Common myeloid progenitor, CD34-positive (primary cell): ENCODE measurements at regions of chr3 and their contacts with region 1.

Region 1: GRCh38 chr3:39146984-39147591 is 6.3 kb downstream of the CSRNP1 start:
- DNase-seq: peak; percentile 83 to 97 (median 94)
- H3K4me3 ChIP-seq: peak overlapping the region in 6 of 7 experiments; percentile 45 to 72 (median 53)
- H3K27ac ChIP-seq: peak overlapping the region; percentile 95 to 96
- H3K4me1 ChIP-seq: peaks cover 25 to 80% (median 73%) of the 10 kb centered on the region in 4 experiments
- H3K27me3 ChIP-seq: no peaks in the 10 kb centered on the region

Region 2: GRCh38 chr3:39107388-39108199 is 39.5 kb before region 1 on chr3 and contains the starts of genes GORASP1 and TTC21A:
- CTCF ChIA-PET with region 1: interaction called, 13 read pairs
- POLR2A ChIA-PET with region 1: interaction called, 6 read pairs
- DNase-seq: peak; percentile 80 to 89 (median 85)
- H3K4me3 ChIP-seq: peak within 1 kb of the TSS; percentile 73 to 94 (median 85)
- H3K27ac ChIP-seq: peak within 1 kb of the TSS; percentile 37 to 71
- H3K4me1 ChIP-seq: peaks cover 2 to 35% (median 25%) of the 10 kb centered on the region in 4 experiments
- H3K27me3 ChIP-seq: no peaks in the 10 kb centered on the region

Region 3: GRCh38 chr3:39166134-39166731 is 19.1 kb after region 1 on chr3:
- CTCF ChIA-PET with region 1: interaction called, 11 read pairs
- POLR2A ChIA-PET with region 1: no interaction called
- DNase-seq: peak in 2 of 3 donors; percentile 49 to 53
- H3K4me3 ChIP-seq: no peak overlapping the region
- H3K27ac ChIP-seq: no peak overlapping the region
- H3K4me1 ChIP-seq: peaks cover 0 to 7% (median 4%) of the 10 kb centered on the region in 4 experiments
- H3K27me3 ChIP-seq: no peaks in the 10 kb centered on the region

Region 4: DNA sequence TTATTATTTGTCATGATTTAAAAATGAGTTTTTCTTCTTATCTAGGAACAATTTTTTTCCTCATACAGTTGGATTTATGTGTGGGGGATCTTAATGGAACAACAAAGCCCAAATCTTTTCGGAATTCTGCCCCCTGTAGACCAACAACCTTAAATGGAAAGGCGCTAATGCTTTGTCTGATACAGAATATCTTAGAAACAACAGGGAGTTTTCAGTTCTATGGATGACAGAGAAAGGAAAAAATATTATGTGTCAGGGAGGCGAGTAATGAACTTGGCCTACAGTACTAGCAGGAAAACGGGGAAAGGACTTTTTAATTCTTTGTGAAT is 321.0 kb after region 1 on chr3:
- CTCF ChIA-PET with region 1: no interaction called
- POLR2A ChIA-PET with region 1: no interaction called
- DNase-seq: no peak
- H3K4me3 ChIP-seq: no peak overlapping the region
- H3K27ac ChIP-seq: no peak overlapping the region
- H3K4me1 ChIP-seq: no peaks in the 10 kb centered on the region
- H3K27me3 ChIP-seq: no peaks in the 10 kb centered on the region